ENCODE measurements at regions of chr3 and their contacts with region 1.

Region 1: DNA sequence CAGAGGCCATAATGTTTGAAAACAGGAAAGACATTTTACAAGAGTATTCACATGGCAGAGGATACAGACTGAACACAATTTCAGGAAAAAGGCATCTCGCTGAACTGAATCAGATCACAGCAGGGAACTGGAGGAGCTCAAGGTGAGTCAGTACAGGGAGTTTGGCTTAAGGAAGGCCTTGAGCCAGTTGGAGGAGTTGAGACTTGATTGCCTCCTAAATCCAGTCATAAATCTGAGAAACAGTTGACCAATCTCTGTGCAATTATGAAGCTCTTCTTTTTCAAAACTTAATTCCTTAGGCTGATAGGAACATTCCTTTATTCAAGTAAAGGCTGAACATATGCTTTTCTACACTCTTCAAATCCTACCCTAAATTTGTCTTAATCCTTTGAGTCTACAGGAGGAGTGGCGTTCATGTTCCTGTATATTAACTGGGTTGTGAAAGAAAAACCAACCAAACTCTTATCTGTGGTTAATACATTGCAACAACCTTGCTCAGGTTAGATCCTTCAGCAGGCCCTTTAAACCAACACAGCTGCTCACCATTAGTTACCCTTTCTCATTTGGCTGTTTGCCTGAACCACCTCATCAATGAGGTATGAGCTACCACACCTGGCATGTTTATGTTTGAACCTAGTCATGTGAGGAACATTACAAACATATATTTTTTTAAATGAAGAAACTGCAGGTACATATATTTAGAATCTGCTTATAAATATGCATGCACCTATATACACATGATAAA is 404.1 kb upstream of the ATP11B start:
- DNase-seq: no peak
- H3K4me3 ChIP-seq: no peak overlapping the region
- H3K27ac ChIP-seq: no peak overlapping the region
- H3K4me1 ChIP-seq: peaks cover 39% of the 10 kb centered on the region
- CTCF ChIP-seq: no peak

Region 2: DNA sequence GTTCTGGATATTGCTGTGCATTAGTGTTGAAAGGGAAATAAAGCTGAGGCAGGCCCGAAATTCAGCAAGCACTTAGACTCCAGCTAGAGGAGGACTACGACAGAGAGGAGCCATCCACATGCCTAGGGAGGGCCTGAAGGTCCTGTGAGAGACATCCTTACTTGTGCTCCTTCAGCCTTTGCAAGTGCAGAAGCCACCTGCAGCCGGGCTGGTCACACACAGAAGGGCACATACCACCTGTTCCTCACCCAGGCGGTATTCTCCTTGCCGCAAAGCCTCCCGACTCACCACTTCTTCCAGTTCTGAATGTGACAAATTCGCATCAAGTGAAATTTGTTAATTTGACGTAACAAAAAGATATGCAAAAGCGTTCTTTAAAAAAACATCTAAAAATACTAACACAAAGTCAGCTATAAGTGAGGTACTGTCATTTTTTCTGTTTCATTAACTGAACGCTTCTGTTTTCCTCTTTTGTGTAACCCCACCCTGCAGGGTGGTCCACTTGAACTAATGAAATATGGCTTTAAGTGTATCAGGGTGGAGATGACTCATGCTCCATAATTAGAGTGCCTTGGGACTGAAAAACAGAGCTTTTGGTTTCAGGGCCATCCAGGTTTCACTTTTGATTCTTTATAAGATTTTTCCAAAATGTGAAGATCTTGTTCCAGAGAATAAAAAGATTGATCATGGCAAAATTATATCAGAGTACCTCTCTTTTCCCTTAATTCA is 63.9 kb before region 1 on chr3:
- CTCF ChIA-PET with region 1: no interaction called
- POLR2A ChIA-PET with region 1: interaction called, 14 read pairs
- intact Hi-C with region 1: no loop called
- DNase-seq: peak; percentile 92
- H3K4me3 ChIP-seq: peak overlapping the region; percentile 40
- H3K27ac ChIP-seq: peak overlapping the region; percentile 84
- H3K4me1 ChIP-seq: peaks cover 69% of the 10 kb centered on the region
- CTCF ChIP-seq: no peak

Region 3: GRCh38 chr3:182404031-182404430 is 14.8 kb after region 1 on chr3:
- CTCF ChIA-PET with region 1: interaction called, 3 read pairs
- POLR2A ChIA-PET with region 1: interaction called, 36 read pairs
- intact Hi-C with region 1: no loop called
- DNase-seq: no peak
- H3K4me3 ChIP-seq: no peak overlapping the region
- H3K27ac ChIP-seq: no peak overlapping the region
- H3K4me1 ChIP-seq: peaks cover 90% of the 10 kb centered on the region
- CTCF ChIP-seq: no peak

Region 4: GRCh38 chr3:182490596-182491491 is 101.6 kb after region 1 on chr3:
- CTCF ChIA-PET with region 1: interaction called, 4 read pairs
- POLR2A ChIA-PET with region 1: interaction called, 6 read pairs
- intact Hi-C with region 1: loop called (anchors 1 kb)
- DNase-seq: peak; percentile 78
- H3K4me3 ChIP-seq: peak overlapping the region; percentile 12
- H3K27ac ChIP-seq: peak overlapping the region; percentile 14
- H3K4me1 ChIP-seq: peaks cover 49% of the 10 kb centered on the region
- CTCF ChIP-seq: peak; percentile 92

Region 5: DNA sequence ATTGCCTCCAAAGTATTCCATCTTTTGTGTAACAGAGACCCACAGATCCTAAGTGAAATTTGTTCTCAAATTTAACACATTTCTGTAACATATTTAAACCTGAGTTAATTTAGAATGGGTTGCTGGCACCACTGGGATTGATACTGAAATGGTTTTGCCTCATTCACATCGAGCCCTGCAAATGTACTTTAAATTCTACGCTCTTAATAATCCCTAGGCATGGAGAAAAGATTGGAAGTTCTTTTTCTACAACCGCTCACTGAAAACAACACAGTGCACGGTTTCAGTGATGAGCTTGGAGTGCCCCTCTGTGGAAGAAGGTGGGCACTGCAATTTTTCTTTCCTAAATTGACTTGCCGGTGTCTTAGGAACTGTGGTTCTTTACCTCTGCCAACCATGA is 294.2 kb after region 1 on chr3:
- CTCF ChIA-PET with region 1: no interaction called
- POLR2A ChIA-PET with region 1: no interaction called
- intact Hi-C with region 1: loop called (anchors 5 kb)
- DNase-seq: peak; percentile 77
- H3K4me3 ChIP-seq: no peak overlapping the region
- H3K27ac ChIP-seq: peak overlapping the region; percentile 54
- H3K4me1 ChIP-seq: peaks cover 12% of the 10 kb centered on the region
- CTCF ChIP-seq: peak; percentile 99

Measured in OCI-LY7 (cell line).